Activated T-helper 2 cell treated with anti-CD3 and anti-CD28 coated beads, Interferon-gamma antibody, Interleukin-2, Interleukin-4, amounts not matched to agents 10 μg/mL and 5 μg/mL and 100 μg/mL, durations not matched to agents 14 hours and 24 hours and 36 hours (primary cell): ENCODE measurements at regions of chr12 and their contacts with region 1.

Region 1: GRCh38 chr12:96906849-96907670 is at the start of gene NEDD1:
- DNase-seq: peak; percentile 80
- H3K4me3 Mint-ChIP-seq: peak within 1 kb of the TSS; percentile 95
- H3K27ac Mint-ChIP-seq: peak within 1 kb of the TSS; percentile 96
- H3K4me1 Mint-ChIP-seq: peaks cover 44% of the 10 kb centered on the region
- H3K27me3 Mint-ChIP-seq: peaks cover 10% of the 10 kb centered on the region
- total RNA-seq, gene NEDD1: 53.7 and 54.2 TPM in 2 replicates

Region 2: DNA sequence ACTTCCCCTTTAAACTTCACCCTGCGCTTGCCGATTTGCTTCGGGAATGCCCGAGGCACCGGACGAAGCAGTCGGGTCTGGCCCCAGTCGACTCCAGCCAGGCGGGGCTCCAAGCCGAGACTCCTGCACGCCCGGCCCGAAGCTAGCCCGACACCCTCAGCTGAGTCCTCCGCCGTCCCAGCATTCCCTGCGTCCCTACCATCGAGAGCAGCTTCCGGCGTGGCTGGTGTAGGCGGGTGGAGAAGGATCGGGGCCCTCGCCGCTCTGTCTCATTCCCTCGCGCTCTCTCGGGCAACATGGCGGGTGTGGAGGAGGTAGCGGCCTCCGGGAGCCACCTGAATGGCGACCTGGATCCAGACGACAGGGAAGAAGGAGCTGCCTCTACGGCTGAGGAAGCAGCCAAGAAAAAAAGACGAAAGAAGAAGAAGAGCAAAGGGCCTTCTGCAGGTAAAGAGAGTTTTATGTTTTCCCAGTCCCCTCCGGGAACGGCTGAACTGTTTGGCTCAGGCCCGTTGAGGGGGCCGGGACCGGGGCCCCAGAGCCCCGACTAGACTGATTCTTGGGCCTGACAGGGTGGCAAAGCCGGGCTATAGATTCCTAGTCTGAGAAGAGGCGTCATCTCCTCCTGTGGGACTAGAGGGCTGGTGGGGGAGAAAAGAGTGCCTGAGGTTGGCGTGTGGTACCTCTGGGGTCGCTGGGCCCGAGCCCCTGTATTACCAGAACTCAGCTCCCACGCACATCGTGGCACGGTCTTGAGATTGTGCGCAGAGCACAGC is 1433.0 kb before region 1 on chr12 and contains the start of gene METAP2:
- intact Hi-C with region 1: loop called (anchors 10 kb)
- DNase-seq: peak; percentile 87
- H3K4me3 Mint-ChIP-seq: peak within 1 kb of the TSS; percentile 100
- H3K27ac Mint-ChIP-seq: peak within 1 kb of the TSS; percentile 99
- H3K4me1 Mint-ChIP-seq: peaks cover 29% of the 10 kb centered on the region
- H3K27me3 Mint-ChIP-seq: no peaks in the 10 kb centered on the region
- total RNA-seq, gene METAP2: 111 and 113 TPM in 2 replicates

Region 3: DNA sequence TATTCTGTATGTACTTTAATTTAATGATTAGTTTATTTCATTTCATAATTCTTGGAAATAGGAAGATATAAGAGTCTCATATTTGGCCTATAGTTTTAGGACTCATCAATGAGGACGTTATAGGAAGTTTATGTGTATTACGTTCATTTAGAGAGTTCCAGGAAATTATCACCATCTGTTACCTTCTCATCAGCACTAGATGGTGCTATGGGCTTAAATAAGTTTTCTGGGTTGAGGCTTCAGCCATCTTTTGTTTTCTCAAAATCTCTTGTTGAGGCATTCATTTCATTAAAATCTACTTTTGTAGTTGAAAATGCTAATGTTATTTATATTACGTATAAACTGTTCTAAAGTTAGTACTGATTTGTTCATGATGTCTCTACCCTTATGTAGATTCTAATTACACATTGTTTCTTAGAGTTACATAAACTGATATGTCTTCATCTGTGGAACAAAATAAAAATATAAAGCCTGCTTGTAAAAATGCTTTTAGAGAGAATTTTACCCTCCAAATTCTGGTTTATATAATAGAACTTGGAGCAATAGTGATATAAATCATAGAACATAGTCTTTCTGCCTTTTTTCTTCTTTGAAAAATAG is 328.4 kb before region 1 on chr12:
- intact Hi-C with region 1: loop called (anchors 5 kb)
- DNase-seq: no peak
- H3K4me3 Mint-ChIP-seq: no peak overlapping the region
- H3K27ac Mint-ChIP-seq: no peak overlapping the region
- H3K4me1 Mint-ChIP-seq: peaks cover 2% of the 10 kb centered on the region
- H3K27me3 Mint-ChIP-seq: peaks cover 14% of the 10 kb centered on the region

Region 4: DNA sequence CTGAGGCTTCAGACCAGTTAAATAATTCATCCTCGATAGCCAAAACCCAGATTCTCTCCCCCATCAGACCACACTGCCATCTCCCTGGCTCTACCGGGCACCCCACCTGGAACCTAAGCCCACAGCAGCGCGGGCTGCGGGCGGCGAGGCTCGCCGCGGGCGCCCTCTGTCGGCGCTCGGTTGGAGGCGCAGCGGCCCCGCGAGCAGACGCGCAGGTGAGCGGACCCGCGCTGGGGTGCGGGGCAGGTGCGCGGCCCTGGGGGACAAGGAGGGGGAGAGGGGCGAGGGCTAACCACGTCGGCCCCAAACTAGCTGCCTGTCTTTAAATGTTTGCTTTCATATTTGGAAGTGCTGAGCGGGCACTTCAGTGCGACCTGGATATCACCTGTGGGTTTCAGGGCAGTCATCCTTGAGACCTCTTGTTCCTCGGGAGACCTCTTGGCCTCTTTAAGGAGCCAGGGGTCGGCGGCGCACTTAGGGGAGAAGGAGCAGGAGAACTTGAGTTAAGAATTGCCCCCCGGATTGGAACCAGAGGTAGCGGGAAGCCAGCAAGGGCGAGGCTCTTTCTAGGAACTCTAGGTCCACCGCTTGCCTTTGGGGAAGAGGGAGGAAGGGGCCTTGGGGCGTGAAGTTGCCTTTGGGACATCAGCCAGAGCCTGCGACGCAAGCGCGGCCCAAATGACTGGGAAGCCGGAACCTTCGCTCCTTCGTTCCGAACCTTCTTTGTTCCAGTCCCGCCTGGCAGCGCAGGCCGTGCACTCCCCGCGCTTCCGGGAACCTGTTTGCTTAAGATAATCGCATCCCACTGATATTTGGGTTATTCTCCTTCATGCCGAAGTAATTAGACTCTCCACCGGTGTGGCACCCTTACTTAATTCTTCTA is 78.7 kb after region 1 on chr12:
- intact Hi-C with region 1: loop called (anchors 5 kb)
- DNase-seq: peak; percentile 22
- H3K4me3 Mint-ChIP-seq: peak overlapping the region; percentile 17
- H3K27ac Mint-ChIP-seq: no peak overlapping the region
- H3K4me1 Mint-ChIP-seq: peaks cover 5% of the 10 kb centered on the region
- H3K27me3 Mint-ChIP-seq: peaks cover 45% of the 10 kb centered on the region

Region 5: DNA sequence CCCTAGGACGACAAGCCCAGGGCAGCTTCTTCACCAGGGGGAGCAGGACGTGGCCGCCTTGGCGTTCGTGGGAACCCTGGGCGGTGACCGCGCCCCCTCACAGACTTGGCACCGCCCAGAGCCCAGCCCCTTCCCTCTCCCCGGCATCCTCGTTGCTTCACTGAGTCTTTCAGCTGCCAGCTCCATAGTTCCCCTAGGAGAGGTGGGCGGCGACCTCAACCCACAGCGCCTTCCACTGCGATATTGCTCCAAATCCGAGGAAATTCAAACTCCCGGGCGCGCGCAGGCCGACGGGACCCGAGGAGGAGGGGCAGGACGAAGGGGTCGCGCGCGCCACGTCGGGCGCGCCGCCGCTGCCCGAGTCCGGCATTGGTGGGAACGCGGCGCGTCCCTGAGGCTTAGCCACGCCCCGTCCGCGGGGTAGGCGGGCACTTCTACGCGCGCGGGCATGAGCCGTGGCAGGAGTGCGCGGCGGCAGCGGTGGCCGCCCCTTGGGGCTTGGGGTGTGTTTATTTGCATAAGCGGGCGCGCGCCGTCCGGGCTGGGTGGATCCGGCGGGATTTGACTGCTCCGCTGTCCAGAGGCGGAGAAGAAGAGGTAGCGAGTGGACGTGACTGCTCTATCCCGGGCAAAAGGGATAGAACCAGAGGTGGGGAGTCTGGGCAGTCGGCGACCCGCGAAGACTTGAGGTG is 1737.8 kb after region 1 on chr12 and contains the starts of genes APAF1 and IKBIP:
- intact Hi-C with region 1: loop called (anchors 2 kb)
- DNase-seq: peak; percentile 94
- H3K4me3 Mint-ChIP-seq: peak within 1 kb of the TSS; percentile 97
- H3K27ac Mint-ChIP-seq: peak within 1 kb of the TSS; percentile 98
- H3K4me1 Mint-ChIP-seq: peaks cover 32% of the 10 kb centered on the region
- H3K27me3 Mint-ChIP-seq: no peaks in the 10 kb centered on the region
- total RNA-seq, gene APAF1: 28.3 and 31.2 TPM in 2 replicates
- total RNA-seq, gene IKBIP: 39.9 and 41.1 TPM in 2 replicates